Right ventricle myocardium inferior (tissue), 1 donor: ENCODE measurements at regions of chr10 and their contacts with region 1.

Region 1: GRCh38 chr10:60208676-60209269 is 180.9 kb downstream of the ANK3 start:
- DNase-seq: no peak
- ATAC-seq: no peak

Region 2: GRCh38 chr10:60099998-60100747 is 108.6 kb before region 1 on chr10:
- intact Hi-C with region 1: loop called (anchors 5 kb)
- DNase-seq: no peak
- ATAC-seq: peak; percentile 68

Region 3: DNA sequence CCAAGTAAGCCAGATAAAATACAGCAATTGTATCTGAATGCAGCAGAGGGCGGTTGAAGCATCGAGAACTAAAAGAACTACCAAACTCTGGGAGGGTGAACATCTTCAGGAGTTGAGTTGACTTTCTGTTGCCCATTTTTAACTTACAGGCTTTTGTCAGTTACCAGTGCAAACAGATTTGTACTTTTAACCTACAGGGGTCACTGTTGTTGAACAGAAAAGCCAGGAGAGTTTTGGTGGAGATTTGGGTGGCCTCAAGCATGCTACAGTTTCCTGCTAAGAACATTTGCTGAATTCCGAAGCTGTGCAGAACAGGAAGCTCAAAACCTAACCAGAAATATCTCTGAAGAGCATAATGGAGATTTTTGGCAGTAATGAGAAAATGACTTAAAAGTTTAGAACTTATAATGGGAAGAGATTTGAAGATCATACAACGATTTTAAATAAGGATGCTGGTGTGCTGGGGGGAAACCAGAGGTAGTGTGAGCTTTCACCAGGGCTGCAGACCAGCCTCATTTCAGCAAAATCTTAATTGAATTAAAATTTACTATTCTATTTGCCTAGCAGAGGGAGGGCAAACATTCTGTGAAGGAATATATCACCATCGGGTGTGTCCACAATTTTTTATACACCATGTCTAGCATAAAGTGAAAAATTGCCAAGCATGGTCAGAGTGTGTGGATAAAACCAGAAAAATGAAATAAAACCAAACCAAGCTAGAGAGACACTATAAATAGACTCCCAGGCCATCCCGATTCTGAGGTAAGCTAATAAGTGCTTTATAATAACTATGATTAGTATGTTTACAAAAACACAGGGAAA is 93.8 kb before region 1 on chr10:
- intact Hi-C with region 1: loop called (anchors 5 kb)
- DNase-seq: no peak
- ATAC-seq: peak; percentile 48

Region 4: DNA sequence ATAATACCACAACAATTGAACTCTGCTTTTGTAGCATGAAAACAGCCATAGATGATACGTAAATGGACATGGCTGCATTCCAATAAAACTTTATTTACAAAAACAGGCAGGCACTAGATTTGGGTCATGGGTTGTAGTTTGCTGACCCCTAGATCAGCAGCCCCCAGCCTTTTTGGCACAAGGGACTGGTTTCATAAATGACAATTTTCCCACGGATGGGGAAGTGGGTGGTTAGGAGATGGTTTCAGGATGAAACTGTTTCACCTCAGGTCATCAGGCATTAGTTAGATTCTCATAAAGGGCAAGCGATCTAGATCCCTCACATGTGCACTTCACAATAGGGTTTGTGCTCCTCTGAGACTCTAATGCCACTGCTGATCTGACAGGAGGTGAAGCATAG is 197.4 kb after region 1 on chr10:
- intact Hi-C with region 1: no loop called
- DNase-seq: no peak
- ATAC-seq: no peak

Region 5: DNA sequence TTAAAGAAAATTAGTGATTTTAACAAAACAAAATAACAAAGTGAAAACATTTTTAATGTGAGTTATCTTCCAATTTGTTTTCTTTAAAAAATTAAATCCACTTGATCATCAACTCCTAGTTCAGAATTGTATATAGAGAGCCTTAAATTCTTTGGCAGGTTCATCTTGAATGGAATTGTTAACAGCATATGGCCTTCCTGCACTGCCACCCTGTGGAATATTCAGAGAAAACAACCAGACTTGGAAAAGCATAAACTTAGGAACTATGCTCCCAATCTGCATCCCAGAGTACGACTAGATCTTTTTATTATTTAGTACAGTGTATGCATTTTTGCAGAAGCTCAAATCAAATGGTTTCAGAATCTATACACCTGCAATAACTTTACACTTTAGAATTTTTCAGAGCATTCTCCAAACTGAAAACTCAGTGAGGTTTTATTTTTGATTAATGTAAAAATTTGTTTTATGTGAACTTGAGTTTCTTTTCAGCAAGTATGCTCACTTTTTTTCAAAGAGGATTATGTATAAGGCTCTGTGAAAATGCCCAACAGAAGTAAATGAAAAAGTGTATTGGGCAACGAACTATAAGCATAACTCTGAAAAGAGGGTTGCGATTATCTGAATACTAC is 225.8 kb after region 1 on chr10:
- intact Hi-C with region 1: loop called (anchors 5 kb)
- DNase-seq: no peak
- ATAC-seq: peak; percentile 64